ENCODE measurements at regions of chr11 and their contacts with region 1.

Region 1: GRCh38 chr11:130427581-130428315 is 661 bp downstream of the ADAMTS8 start:
- DNase-seq: no peak

Region 2: GRCh38 chr11:130213143-130213978 is 214.4 kb before region 1 on chr11:
- intact Hi-C with region 1: loop called in 1 of 2 experiments (anchors 10 kb)
- DNase-seq: peak; percentile 90

Region 3: DNA sequence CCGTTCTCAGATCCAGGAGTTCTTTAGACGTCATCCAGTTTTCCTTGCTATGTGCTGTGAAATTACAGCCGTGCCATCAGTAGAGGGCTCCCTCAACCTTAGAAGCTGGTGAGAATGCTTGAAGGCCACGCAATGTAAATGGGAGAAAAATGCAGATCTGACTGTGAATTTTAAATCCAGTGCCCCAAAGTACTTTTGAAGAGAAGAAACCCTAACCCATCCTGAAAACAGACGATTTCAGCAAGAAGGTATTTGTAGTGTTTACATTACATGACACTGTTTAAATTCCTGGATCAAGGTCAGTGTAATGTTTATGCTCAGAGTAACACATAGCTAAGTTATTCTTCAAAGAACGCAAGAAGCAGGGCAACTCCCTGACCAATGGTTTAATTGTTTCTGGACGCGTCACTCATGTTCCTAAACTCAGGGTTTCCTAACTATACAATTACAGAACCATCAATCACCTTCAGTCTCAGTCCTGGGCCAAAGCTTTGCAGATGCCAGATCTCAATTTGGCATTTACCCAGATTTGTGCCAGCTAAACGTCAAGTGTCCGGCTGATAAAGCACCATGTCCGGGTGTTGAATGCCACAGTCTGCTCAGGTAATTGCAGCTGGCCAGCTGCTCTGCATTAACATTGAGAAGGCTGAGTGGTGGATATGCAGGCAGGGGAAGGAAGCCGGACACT is 37.5 kb before region 1 on chr11:
- intact Hi-C with region 1: loop called in 1 of 2 experiments (anchors 2 kb)
- DNase-seq: no peak

Region 4: DNA sequence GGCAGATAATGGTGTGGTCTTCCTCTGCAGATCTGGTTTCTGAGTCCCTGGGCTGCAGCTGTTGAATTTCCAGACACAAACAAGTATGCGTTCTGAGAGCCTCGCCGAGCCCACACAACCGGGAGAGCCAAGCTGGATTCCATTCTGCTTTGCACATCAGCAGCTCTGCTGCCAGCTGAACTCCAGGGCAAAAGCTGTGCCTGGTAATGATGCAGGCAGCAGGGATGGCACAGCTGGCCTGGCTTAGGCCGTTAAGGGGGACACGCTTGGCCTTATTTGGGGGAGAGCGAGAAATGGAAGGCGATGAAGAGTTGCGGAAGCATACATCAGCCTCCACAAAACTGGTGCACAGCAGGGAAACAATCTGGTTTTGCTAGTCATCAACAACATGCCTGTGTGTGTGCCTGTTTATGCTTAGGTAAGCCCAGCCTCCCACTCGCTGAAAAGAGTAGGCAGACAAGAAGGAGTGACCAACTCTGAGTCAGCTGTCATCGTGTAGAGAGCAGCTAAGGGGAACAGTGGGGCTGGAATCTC is 24.4 kb before region 1 on chr11:
- intact Hi-C with region 1: no loop called
- DNase-seq: peak; percentile 89

Measured in posterior vena cava (tissue), 2 donors.